ENCODE measurements at regions of chr2 and their contacts with region 1.

Region 1: GRCh38 chr2:43024515-43025011 is 201.8 kb downstream of the ZFP36L2 start:
- DNase-seq: peak; percentile 38 to 89
- H3K4me3 ChIP-seq: no peak overlapping the region
- H3K27ac ChIP-seq: no peak overlapping the region
- H3K4me1 ChIP-seq: peaks cover 2 to 10% (median 3%) of the 10 kb centered on the region in 4 experiments; a peak in 4 of 7 replicates
- H3K27me3 ChIP-seq: no peaks in the 10 kb centered on the region
- CTCF ChIP-seq: peak; percentile 87 to 93 (median 90)
- EP300 ChIP-seq: no peak
- POLR2A ChIP-seq: no peak
- RAD21 ChIP-seq: peak; percentile 88 to 93

Region 2: GRCh38 chr2:42964439-42965083 is 60.0 kb before region 1 on chr2:
- CTCF ChIA-PET with region 1: interaction called, 11 read pairs
- POLR2A ChIA-PET with region 1: no interaction called
- DNase-seq: no peak
- H3K4me3 ChIP-seq: no peak overlapping the region
- H3K27ac ChIP-seq: no peak overlapping the region
- H3K4me1 ChIP-seq: peaks cover 2 to 14% (median 8%) of the 10 kb centered on the region in 4 experiments
- H3K27me3 ChIP-seq: peaks cover 0 to 3% (median under 1%) of the 10 kb centered on the region in 4 experiments; a peak in 1 of 7 replicates
- CTCF ChIP-seq: no peak
- EP300 ChIP-seq: no peak
- POLR2A ChIP-seq: no peak
- RAD21 ChIP-seq: no peak

Region 3: DNA sequence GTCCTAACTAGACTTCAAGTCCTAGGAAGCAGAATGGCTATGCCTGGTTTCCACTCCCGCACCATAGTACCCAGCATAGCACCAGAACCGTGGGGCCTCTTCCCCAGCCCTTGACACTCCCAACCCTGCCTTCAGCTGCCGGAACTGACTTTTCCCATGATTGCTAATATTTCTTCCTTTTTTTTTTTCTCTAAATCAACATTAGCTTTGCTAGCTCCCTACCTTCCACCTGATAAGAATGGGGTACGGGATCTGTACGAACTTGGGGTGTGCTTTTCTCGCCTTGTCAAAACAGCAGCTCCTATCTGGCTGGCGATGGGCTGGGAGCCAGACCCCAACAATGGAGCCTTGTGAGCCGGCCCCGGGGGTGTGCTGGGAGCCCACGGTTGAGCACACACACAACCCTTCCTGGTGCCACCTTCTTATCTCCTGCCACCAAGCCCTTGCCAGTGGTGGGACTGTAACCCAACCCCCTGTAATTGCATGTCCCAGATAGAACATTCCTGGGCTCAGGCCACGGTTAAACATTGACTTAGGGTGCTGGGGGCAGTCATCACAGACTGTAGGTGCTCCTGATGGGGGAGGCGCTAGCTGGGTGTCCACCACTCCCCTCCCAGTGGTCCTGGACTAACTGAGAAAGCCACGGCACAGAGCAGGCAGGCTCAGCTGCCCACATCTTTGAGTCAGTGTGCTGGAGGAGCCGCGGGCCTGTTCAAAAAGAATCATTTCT is 19.2 kb before region 1 on chr2:
- CTCF ChIA-PET with region 1: interaction called, 21 read pairs
- POLR2A ChIA-PET with region 1: no interaction called
- DNase-seq: no peak
- H3K4me3 ChIP-seq: no peak overlapping the region
- H3K27ac ChIP-seq: no peak overlapping the region
- H3K4me1 ChIP-seq: peaks cover 0 to 3% (median 0%) of the 10 kb centered on the region in 4 experiments; a peak in 1 of 7 replicates
- H3K27me3 ChIP-seq: no peaks in the 10 kb centered on the region
- CTCF ChIP-seq: no peak
- EP300 ChIP-seq: no peak
- POLR2A ChIP-seq: no peak
- RAD21 ChIP-seq: no peak

Region 4: GRCh38 chr2:43041661-43042360 is 17.2 kb after region 1 on chr2:
- CTCF ChIA-PET with region 1: interaction called, 18 read pairs
- POLR2A ChIA-PET with region 1: no interaction called
- DNase-seq: peak; percentile 60 to 77
- H3K4me3 ChIP-seq: peak overlapping the region in 1 of 4 experiments; percentile 27; a peak in 1 of 8 replicates
- H3K27ac ChIP-seq: no peak overlapping the region
- H3K4me1 ChIP-seq: peaks cover 0 to 11% (median 8%) of the 10 kb centered on the region in 4 experiments; a peak in 6 of 7 replicates
- H3K27me3 ChIP-seq: no peaks in the 10 kb centered on the region
- CTCF ChIP-seq: no peak
- EP300 ChIP-seq: no peak
- POLR2A ChIP-seq: no peak
- RAD21 ChIP-seq: no peak

Region 5: DNA sequence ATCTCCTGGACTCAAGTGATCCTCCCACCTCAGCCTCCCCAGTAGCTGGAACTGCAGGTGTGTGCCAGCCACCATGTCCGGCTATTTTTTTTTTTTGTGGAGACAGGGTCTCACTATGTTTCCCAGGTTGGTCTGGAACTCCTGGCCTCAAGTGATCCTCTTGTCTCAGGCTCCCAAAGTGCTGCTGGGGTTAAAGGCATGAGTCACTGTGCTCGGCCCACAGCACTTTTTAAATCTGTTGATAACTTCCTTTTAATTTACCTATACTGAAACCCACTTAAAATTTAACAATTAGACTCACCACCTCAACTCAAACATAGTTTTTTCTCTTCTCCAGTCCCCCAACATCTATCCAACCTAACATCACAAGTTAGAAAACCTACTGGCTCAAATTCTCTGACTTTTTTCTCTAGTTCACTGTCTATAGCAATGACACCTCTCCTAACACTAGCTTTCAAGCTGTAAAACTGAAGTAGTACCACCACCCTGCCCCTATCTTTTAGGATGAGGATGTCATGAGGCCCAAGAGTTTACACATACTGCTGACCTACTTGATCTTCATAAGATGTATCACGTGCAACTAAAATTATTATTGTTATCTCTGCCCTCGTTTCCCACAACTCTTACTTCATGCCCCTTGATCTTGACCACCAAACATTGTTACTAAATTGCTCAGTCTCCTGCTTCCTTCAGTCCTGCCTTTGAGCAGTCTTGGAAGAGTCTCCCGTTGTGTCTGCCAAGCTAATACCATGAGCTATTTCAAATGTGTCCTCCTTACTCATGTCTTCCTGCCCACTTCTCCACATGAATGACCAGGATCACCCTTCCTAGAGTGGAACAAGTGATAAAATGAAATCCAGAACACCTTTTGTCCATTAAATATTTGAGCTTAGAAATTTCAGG is 344.2 kb after region 1 on chr2:
- CTCF ChIA-PET with region 1: no interaction called
- POLR2A ChIA-PET with region 1: no interaction called
- DNase-seq: no peak
- H3K4me3 ChIP-seq: no peak overlapping the region
- H3K27ac ChIP-seq: no peak overlapping the region
- H3K4me1 ChIP-seq: no peaks in the 10 kb centered on the region; a peak in 2 of 7 replicates
- H3K27me3 ChIP-seq: no peaks in the 10 kb centered on the region
- CTCF ChIP-seq: no peak
- EP300 ChIP-seq: no peak
- POLR2A ChIP-seq: no peak
- RAD21 ChIP-seq: no peak